ENCODE measurements at regions of chr11 and their contacts with region 1.

Region 1: GRCh38 chr11:86795890-86796289 is 4.5 kb upstream of the PRSS23 start:
- DNase-seq: no peak
- H3K4me3 ChIP-seq: no peak overlapping the region
- H3K27ac ChIP-seq: no peak overlapping the region
- H3K4me1 ChIP-seq: peaks cover 0 to 2% of the 10 kb centered on the region in 2 donors
- H3K27me3 ChIP-seq: no peaks in the 10 kb centered on the region
- CTCF ChIP-seq: no peak

Region 2: DNA sequence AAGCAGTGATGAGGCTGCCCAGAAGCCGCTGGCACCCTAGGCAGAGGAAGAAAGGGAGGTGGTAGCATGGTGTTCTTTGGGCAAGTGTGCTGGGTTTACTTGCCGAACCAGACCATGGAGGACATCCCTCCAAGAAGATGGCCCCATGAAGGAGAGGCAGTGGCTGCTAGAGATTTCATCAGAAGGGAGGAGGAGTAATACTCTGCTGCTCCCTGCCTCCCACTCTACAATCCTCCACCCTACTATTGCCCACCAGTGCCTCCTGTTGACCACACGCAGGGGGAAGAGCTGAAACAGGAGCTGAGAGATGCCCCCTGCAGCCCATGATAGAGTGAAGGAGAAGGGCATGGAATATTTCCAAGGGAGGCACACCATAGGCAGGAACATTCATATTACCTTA is 46.5 kb before region 1 on chr11:
- intact Hi-C with region 1: loop called (anchors 2 kb)
- DNase-seq: no peak
- H3K4me3 ChIP-seq: no peak overlapping the region
- H3K27ac ChIP-seq: no peak overlapping the region
- H3K4me1 ChIP-seq: peaks cover 0 to 5% of the 10 kb centered on the region in 2 donors
- H3K27me3 ChIP-seq: no peaks in the 10 kb centered on the region
- CTCF ChIP-seq: no peak